HepG2 (cell line): ENCODE measurements at regions of chr14 and their contacts with region 1.

Region 1: GRCh38 chr14:73785873-73786695 is 65.5 kb upstream of the PTGR2 start:
- DNase-seq: peak; percentile 95
- ATAC-seq: peak; percentile 87
- H3K4me3 ChIP-seq: peak overlapping the region; percentile 76 to 80 (median 79)
- H3K27ac ChIP-seq: peak overlapping the region; percentile 86
- H3K4me1 ChIP-seq: peaks cover 70% of the 10 kb centered on the region
- H3K27me3 ChIP-seq: no peaks in the 10 kb centered on the region; a peak in 1 of 5 replicates
- CTCF ChIP-seq: peak; percentile 36; the same call in 1 of the 2 replicates
- EP300 ChIP-seq: peak; percentile 81 to 87; a peak in 3 of 4 replicates
- POLR2A ChIP-seq: peak; percentile 84 to 86
- RAD21 ChIP-seq: peak; percentile 60

Region 2: DNA sequence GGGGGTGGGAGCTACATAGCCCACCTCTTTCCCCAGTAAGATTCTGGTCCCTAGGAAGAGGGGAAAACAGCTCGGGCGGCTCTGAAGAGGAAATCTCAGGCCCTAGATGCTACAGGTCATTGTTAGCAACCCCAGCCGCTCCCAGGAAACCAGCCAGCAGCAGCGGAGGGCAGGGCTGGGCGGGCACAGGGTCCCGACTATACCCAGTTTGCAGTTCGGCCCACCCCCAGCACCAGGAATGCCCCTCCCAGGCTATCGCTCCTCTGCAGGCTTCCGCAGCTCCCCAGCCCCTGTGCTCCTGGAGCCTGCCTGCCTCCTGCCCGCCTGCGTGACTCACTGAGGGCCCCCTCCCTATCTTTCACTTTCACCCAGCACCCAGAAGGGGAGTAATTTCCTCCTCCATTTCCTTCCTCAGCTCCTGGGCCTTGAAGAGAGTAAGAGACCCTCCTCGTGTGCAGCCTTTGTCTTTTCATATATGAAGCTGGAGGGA is 44.7 kb before region 1 on chr14:
- CTCF ChIA-PET with region 1: no interaction called
- POLR2A ChIA-PET with region 1: interaction called, 12 read pairs
- in situ Hi-C with region 1: no loop called
- intact Hi-C with region 1: no loop called
- DNase-seq: peak; percentile 61
- ATAC-seq: peak; percentile 72
- H3K4me3 ChIP-seq: peak overlapping the region; percentile 37 to 60 (median 41)
- H3K27ac ChIP-seq: peak overlapping the region; percentile 61
- H3K4me1 ChIP-seq: peaks cover 70% of the 10 kb centered on the region
- H3K27me3 ChIP-seq: no peaks in the 10 kb centered on the region
- CTCF ChIP-seq: peak; percentile 19; the same call in 1 of the 2 replicates
- EP300 ChIP-seq: no peak
- POLR2A ChIP-seq: no peak
- RAD21 ChIP-seq: no peak

Region 3: GRCh38 chr14:73771848-73772638 is 14.0 kb before region 1 on chr14:
- CTCF ChIA-PET with region 1: no interaction called
- POLR2A ChIA-PET with region 1: interaction called, 51 read pairs
- in situ Hi-C with region 1: no loop called
- intact Hi-C with region 1: loop called (anchors 1 kb)
- DNase-seq: peak; percentile 94
- ATAC-seq: peak; percentile 95
- H3K4me3 ChIP-seq: peak overlapping the region in 1 of 3 experiments; percentile 27; a peak in 1 of 6 replicates
- H3K27ac ChIP-seq: peak overlapping the region; percentile 53
- H3K4me1 ChIP-seq: peaks cover 79% of the 10 kb centered on the region
- H3K27me3 ChIP-seq: no peaks in the 10 kb centered on the region
- CTCF ChIP-seq: peak; percentile 29
- EP300 ChIP-seq: peak in 1 of 2 experiments; percentile 69; a peak in 2 of 4 replicates
- POLR2A ChIP-seq: peak in 1 of 2 experiments; percentile 49; a peak in 1 of 4 replicates
- RAD21 ChIP-seq: peak; percentile 71

Region 4: GRCh38 chr14:73802431-73803188 is 16.5 kb after region 1 on chr14:
- CTCF ChIA-PET with region 1: no interaction called
- POLR2A ChIA-PET with region 1: interaction called, 91 read pairs
- in situ Hi-C with region 1: no loop called
- intact Hi-C with region 1: no loop called
- DNase-seq: no peak
- ATAC-seq: peak; percentile 92
- H3K4me3 ChIP-seq: peak overlapping the region; percentile 14 to 68 (median 37); a peak in 5 of 6 replicates
- H3K27ac ChIP-seq: peak overlapping the region; percentile 39
- H3K4me1 ChIP-seq: peaks cover 31% of the 10 kb centered on the region
- H3K27me3 ChIP-seq: no peaks in the 10 kb centered on the region; a peak in 1 of 5 replicates
- CTCF ChIP-seq: peak; percentile 12; the same call in 1 of the 2 replicates
- EP300 ChIP-seq: no peak
- POLR2A ChIP-seq: peak; percentile 47 to 53; a peak in 2 of 4 replicates
- RAD21 ChIP-seq: no peak

Region 5: DNA sequence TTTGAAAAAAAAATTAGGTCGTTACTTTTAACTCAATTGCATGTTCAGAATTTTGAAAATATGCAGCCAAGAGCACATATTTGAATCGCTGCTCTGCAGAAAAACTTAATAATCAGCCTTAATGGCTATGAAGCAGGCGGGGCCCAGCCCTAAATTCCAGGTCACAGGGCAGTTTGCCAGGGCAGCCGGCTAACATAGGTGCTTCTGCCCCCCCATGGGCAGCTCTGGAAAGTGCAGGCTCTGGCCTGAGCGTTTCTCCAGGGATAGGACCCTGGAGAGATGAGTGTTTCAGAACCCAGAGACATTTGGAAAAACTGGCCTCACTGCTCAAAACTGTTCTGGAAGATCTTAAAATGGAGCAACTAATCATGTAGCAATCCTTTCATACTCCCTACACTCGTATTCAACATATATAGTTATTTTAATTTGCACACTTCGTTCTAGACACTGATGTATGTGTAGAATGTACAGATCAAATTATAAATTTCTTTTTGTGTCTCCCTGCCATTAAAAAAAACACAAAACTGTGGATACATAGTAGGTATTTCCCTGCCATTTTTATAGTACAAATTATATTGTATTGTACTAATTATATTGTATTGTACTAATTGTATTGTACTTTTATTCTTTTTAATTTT is 39.6 kb after region 1 on chr14:
- CTCF ChIA-PET with region 1: interaction called, 3 read pairs
- POLR2A ChIA-PET with region 1: interaction called, 4 read pairs
- in situ Hi-C with region 1: no loop called
- intact Hi-C with region 1: loop called (anchors 2 kb)
- DNase-seq: peak; percentile 69
- ATAC-seq: peak; percentile 92
- H3K4me3 ChIP-seq: no peak overlapping the region
- H3K27ac ChIP-seq: no peak overlapping the region
- H3K4me1 ChIP-seq: peaks cover 15% of the 10 kb centered on the region
- H3K27me3 ChIP-seq: peaks cover 0 to 2% of the 10 kb centered on the region in 2 experiments; a peak in 2 of 5 replicates
- CTCF ChIP-seq: peak; percentile 90
- EP300 ChIP-seq: no peak
- POLR2A ChIP-seq: no peak
- RAD21 ChIP-seq: peak; percentile 94

Region 6: DNA sequence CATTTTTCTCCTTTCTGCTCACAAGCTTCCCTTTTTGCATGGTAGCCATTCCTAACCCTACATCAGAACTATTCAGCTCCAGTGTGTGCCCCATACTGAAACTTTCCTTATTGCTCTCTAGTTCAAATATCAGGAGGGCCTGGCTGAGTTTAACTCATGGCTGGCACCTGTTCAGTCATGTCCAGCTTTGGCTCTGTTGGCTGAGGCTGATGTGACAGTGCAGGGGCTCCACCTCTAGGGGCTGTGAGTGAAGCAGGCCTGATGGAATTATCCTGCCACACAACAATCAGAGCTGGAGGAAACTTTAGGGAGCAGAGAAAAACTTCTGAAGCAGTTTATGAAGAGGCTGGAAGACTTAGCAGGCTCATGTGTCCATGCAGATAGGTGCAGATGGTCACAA is 172.5 kb after region 1 on chr14:
- CTCF ChIA-PET with region 1: no interaction called
- POLR2A ChIA-PET with region 1: no interaction called
- in situ Hi-C with region 1: no loop called
- intact Hi-C with region 1: no loop called
- DNase-seq: no peak
- ATAC-seq: peak; percentile 78
- H3K4me3 ChIP-seq: no peak overlapping the region
- H3K27ac ChIP-seq: peak overlapping the region; percentile 1
- H3K4me1 ChIP-seq: no peaks in the 10 kb centered on the region
- H3K27me3 ChIP-seq: no peaks in the 10 kb centered on the region
- CTCF ChIP-seq: no peak
- EP300 ChIP-seq: no peak
- POLR2A ChIP-seq: no peak
- RAD21 ChIP-seq: no peak